Activated T-helper 1 cell treated with anti-CD3 and anti-CD28 coated beads, Interleukin-12 subunit alpha, Interleukin-12 subunit beta, Interleukin-2, Interleukin-4 antibody, amounts not matched to agents 30 ng/mL and 10 ng/mL and 1 ng/mL, durations not matched to agents 14 hours and 24 hours and 36 hours (primary cell): ENCODE measurements at regions of chr9 and their contacts with region 1.

Region 1: DNA sequence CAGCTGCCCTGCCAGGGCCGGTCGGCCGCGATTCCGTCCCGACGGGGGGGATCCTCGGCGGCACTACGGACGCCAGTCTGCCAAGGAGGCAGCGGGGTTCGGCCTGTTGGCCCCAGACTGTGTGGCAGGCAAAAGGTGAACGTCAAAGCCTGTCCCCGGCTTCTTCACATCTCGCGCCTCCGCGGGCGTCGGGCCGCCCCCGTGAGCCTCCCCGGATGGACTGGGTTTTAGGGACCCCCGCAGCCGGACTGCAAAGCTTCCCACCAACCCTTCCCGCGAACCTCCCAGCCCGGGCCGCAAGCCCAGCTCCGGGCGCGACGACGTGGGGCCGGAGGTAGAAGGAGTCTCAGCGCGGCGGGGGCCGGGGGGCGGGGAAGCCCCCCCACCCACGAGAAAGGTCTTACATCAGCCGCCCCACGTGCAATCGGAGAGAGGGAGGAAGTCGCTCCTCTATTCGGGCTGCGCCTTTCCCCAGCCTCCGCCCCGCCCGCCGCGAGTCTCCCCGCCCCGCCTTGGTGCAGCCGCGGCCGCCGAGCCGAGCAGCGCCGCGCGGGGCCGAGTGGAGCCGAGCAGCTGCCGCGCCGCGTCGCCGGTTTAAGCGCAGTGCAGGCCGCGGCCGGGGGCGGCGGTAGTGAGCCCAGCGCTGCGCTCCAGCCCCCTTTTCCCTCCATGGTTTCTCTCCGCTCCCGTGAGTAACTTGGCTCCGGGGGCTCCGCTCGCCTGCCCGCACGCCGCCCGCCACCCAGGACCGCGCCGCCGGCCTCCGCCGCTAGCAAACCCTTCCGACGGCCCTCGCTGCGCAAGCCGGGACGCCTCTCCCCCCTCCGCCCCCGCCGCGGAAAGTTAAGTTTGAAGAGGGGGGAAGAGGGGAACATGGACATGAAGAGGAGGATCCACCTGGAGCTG is at the start of gene ANP32B:
- DNase-seq: peak; percentile 93
- H3K4me3 Mint-ChIP-seq: peak within 1 kb of the TSS; percentile 80
- H3K27ac Mint-ChIP-seq: peak within 1 kb of the TSS; percentile 78
- H3K4me1 Mint-ChIP-seq: peaks cover 46% of the 10 kb centered on the region
- H3K27me3 Mint-ChIP-seq: no peaks in the 10 kb centered on the region
- total RNA-seq, gene ANP32B: 305 and 313 TPM in 2 replicates

Region 2: GRCh38 chr9:97857606-97858392 is 125.1 kb before region 1 on chr9:
- intact Hi-C with region 1: no loop called
- DNase-seq: no peak
- H3K4me3 Mint-ChIP-seq: no peak overlapping the region
- H3K27ac Mint-ChIP-seq: no peak overlapping the region
- H3K4me1 Mint-ChIP-seq: peaks cover 9% of the 10 kb centered on the region
- H3K27me3 Mint-ChIP-seq: peaks cover 74% of the 10 kb centered on the region

Region 3: GRCh38 chr9:97954550-97954989 is 28.4 kb before region 1 on chr9:
- intact Hi-C with region 1: loop called (anchors 2 kb)
- DNase-seq: peak; percentile 35
- H3K4me3 Mint-ChIP-seq: no peak overlapping the region
- H3K27ac Mint-ChIP-seq: no peak overlapping the region
- H3K4me1 Mint-ChIP-seq: no peaks in the 10 kb centered on the region
- H3K27me3 Mint-ChIP-seq: peaks cover 8% of the 10 kb centered on the region

Region 4: DNA sequence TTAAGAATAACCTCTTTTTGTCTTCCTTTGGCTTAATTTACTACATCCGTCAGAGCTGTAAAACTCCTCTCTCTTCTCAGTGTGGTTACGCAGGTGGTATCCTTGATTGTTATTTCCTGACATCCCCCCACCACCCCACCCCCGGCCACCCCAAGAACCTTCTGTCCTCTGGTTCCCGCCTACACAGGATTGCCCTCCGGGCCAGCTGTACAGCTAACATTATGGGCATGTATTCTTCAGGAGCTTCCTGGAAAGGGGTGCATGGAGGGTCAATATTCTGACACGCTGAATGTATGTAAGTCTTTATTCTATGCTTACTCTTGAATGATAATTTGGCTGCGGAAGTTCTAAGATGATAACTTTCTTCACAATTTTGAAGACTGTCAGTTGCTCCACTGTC is 12.8 kb before region 1 on chr9:
- intact Hi-C with region 1: no loop called
- DNase-seq: no peak
- H3K4me3 Mint-ChIP-seq: no peak overlapping the region
- H3K27ac Mint-ChIP-seq: no peak overlapping the region
- H3K4me1 Mint-ChIP-seq: no peaks in the 10 kb centered on the region
- H3K27me3 Mint-ChIP-seq: peaks cover 18% of the 10 kb centered on the region

Region 5: DNA sequence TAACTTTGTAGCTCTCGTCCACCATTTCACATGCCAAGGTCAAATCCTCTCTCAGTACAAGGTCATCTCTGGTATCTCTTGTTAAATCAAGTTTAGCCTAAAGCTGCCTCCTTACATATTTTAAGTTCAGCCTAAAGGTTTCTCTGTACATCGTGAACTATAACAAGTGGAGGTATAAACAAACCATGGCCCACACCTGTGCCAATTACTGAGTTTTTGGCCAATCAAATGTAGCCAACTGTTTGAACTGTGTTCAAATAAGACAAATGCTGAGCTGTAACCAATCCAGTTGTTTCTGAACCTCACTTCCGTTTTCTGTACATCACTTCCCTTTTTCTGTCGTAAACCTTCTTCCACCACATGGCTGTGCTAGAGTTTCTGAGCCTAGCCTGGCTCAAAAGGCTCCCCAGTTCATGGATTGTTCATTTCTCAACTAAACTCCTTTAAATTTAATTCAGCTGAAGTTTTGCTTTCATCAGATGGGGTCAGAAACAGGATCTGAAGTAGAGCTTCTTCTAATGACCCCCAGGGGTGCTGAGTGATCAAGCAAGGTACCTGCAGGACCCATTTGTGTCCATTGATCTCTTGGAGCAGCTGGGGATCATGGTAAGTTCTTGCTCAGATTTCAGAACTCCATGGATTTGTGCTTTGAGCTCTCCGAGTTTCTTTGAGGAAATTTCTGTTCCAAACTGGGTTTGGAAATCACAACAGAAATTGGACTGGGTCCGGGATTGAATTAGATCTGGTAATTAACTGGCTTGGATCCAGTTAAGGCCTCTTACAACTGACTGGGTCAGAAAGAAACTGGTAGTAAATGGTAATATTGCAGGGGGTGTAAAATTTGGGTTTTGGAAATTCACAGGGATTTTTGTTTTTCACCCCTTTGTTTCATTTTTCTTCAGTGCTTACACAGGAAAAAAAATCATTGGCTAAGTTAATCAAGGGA is 62.6 kb after region 1 on chr9:
- intact Hi-C with region 1: loop called (anchors 1 kb)
- DNase-seq: peak; percentile 38
- H3K4me3 Mint-ChIP-seq: peak overlapping the region; percentile 87
- H3K27ac Mint-ChIP-seq: peak overlapping the region; percentile 86
- H3K4me1 Mint-ChIP-seq: peaks cover 41% of the 10 kb centered on the region
- H3K27me3 Mint-ChIP-seq: peaks cover 6% of the 10 kb centered on the region

Region 6: GRCh38 chr9:98101868-98102273 is 118.9 kb after region 1 on chr9:
- intact Hi-C with region 1: loop called (anchors 5 kb)
- DNase-seq: peak; percentile 83
- H3K4me3 Mint-ChIP-seq: peak overlapping the region; percentile 69
- H3K27ac Mint-ChIP-seq: peak overlapping the region; percentile 88
- H3K4me1 Mint-ChIP-seq: peaks cover 85% of the 10 kb centered on the region
- H3K27me3 Mint-ChIP-seq: no peaks in the 10 kb centered on the region

Region 7: DNA sequence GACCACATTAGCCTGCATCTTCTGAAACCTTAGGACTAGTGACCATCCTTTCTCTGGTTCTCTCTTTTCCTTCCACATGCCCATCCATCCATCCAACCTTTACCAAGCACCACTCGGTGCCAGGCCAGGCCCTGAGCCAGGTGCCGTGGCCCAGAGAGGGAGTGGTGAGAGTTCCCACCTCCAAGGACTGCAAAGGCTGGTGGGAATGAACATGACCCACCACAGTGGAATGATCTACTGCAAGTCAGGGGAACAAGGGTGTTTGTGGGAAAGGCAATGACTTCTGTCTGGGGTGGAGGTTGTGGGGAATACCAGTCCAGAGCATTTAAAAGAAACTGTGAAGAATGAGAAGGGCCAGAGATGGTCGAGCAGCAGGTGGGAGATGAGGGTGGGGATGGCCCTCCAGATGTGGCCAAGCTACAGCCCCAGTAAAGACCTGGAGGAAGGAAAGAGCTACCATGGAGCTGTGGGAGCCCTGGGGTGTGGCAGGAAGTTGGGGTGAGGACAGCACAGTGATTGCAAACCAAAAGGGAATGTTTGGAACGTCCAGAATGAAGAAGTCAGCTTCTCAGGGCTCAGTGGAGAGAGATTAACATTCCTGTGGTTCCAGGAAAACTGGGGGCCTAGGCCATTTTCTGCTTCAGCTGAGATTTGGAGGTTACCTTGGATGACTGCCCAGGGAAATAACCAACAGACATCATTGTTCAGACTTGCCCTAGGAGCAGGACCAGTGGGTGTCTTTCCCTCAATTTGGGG is 240.1 kb after region 1 on chr9:
- intact Hi-C with region 1: no loop called
- DNase-seq: no peak
- H3K4me3 Mint-ChIP-seq: no peak overlapping the region
- H3K27ac Mint-ChIP-seq: no peak overlapping the region
- H3K4me1 Mint-ChIP-seq: no peaks in the 10 kb centered on the region
- H3K27me3 Mint-ChIP-seq: no peaks in the 10 kb centered on the region